Activated CD4-positive, alpha-beta T cell treated with anti-CD3 and anti-CD28 coated beads, Interleukin-2, amount 10 ng/mL, durations not matched to agents 24 days and 14 days (primary cell): ENCODE measurements at regions of chr7 and their contacts with region 1.

Region 1: GRCh38 chr7:140902303-140902953 is 22.3 kb downstream of the BRAF start:
- DNase-seq: peak; percentile 66
- H3K4me3 Mint-ChIP-seq: peak overlapping the region; percentile 55
- H3K27ac Mint-ChIP-seq: peak overlapping the region; percentile 82
- H3K4me1 Mint-ChIP-seq: peaks cover 29% of the 10 kb centered on the region
- H3K27me3 Mint-ChIP-seq: no peaks in the 10 kb centered on the region

Region 2: GRCh38 chr7:140876519-140877248 is 25.7 kb before region 1 on chr7:
- intact Hi-C with region 1: loop called (anchors 1 kb)
- DNase-seq: no peak
- H3K4me3 Mint-ChIP-seq: no peak overlapping the region
- H3K27ac Mint-ChIP-seq: no peak overlapping the region
- H3K4me1 Mint-ChIP-seq: peaks cover 21% of the 10 kb centered on the region
- H3K27me3 Mint-ChIP-seq: peaks cover 2% of the 10 kb centered on the region